CD8-positive, alpha-beta T cell (primary cell): ENCODE measurements at regions of chr7 and their contacts with region 1.

Region 1: GRCh38 chr7:39465055-39465929 is 100.9 kb upstream of the YAE1 start:
- DNase-seq: peak in 5 of 9 experiments; percentile 19 to 52 (median 27)
- ATAC-seq: peak; percentile 34
- H3K4me3 ChIP-seq: no peak overlapping the region
- H3K4me3 Mint-ChIP-seq: no peak overlapping the region
- H3K27ac ChIP-seq: no peak overlapping the region
- H3K27ac Mint-ChIP-seq: no peak overlapping the region
- H3K4me1 ChIP-seq: no peaks in the 10 kb centered on the region
- H3K4me1 Mint-ChIP-seq: peaks cover 5% of the 10 kb centered on the region
- H3K27me3 ChIP-seq: no peaks in the 10 kb centered on the region
- H3K27me3 Mint-ChIP-seq: peaks cover 6% of the 10 kb centered on the region
- CTCF ChIP-seq: peak; percentile 55

Region 2: GRCh38 chr7:38796626-38797501 is 668.4 kb before region 1 on chr7:
- CTCF ChIA-PET with region 1: interaction called, 5 read pairs
- POLR2A ChIA-PET with region 1: no interaction called
- intact Hi-C with region 1: loop called in 1 of 2 experiments (anchors 1 kb)
- DNase-seq: peak; percentile 4 to 63 (median 51)
- ATAC-seq: no peak
- H3K4me3 ChIP-seq: no peak overlapping the region
- H3K4me3 Mint-ChIP-seq: no peak overlapping the region
- H3K27ac ChIP-seq: no peak overlapping the region
- H3K27ac Mint-ChIP-seq: no peak overlapping the region
- H3K4me1 ChIP-seq: no peaks in the 10 kb centered on the region
- H3K4me1 Mint-ChIP-seq: no peaks in the 10 kb centered on the region
- H3K27me3 ChIP-seq: no peaks in the 10 kb centered on the region
- H3K27me3 Mint-ChIP-seq: no peaks in the 10 kb centered on the region
- CTCF ChIP-seq: peak; percentile 90